Activated T-helper 2 cell treated with anti-CD3 and anti-CD28 coated beads, Interferon-gamma antibody, Interleukin-2, Interleukin-4, amounts not matched to agents 10 μg/mL and 5 μg/mL and 100 μg/mL, durations not matched to agents 14 hours and 24 hours and 36 hours (primary cell): ENCODE measurements at regions of chr1 and their contacts with region 1.

Region 1: GRCh38 chr1:215526553-215527151 is 40.5 kb upstream of the KCTD3 start:
- DNase-seq: no peak
- H3K4me3 Mint-ChIP-seq: no peak overlapping the region
- H3K27ac Mint-ChIP-seq: no peak overlapping the region
- H3K4me1 Mint-ChIP-seq: no peaks in the 10 kb centered on the region
- H3K27me3 Mint-ChIP-seq: peaks cover 5% of the 10 kb centered on the region

Region 2: DNA sequence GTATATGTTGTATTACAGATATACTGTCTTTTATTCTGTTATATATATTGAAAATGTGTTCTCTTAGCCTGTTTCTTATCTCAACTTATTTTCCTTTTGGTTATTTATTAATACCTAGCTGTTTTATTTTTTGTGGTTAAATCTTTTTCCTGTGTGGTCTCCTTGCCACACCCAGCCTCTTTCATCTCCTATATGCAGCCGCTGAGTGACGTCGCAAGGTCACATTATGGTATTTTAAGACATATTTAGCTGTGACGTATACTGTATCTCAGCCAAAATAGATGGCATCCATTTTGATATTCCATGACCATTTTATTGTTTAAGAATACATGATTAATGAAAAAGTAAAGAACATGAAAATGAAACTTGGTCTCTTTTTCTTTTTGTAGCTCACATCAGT is 894.6 kb before region 1 on chr1:
- intact Hi-C with region 1: loop called (anchors 5 kb)
- DNase-seq: no peak
- H3K4me3 Mint-ChIP-seq: no peak overlapping the region
- H3K27ac Mint-ChIP-seq: no peak overlapping the region
- H3K4me1 Mint-ChIP-seq: peaks cover 31% of the 10 kb centered on the region
- H3K27me3 Mint-ChIP-seq: no peaks in the 10 kb centered on the region

Region 3: DNA sequence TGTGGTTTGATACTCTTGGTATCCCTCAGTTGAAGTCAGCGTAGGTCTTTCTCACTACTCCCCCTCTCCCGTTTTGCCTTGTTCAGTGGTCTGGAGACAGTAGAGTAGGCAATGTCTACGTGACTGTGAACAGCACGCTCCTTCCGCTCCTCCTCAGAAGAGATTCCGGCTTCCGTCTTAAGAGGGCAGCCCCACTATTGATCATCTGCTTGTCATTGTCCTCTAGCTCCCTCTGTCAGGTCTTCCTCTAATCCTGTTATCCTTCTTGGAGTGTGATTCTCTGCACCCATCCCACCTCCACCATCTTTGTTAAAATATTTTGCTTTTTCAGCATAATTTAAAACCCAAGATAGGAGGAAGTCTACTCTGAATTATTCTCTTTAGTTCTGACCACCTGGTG is 574.0 kb before region 1 on chr1:
- intact Hi-C with region 1: no loop called
- DNase-seq: no peak
- H3K4me3 Mint-ChIP-seq: no peak overlapping the region
- H3K27ac Mint-ChIP-seq: no peak overlapping the region
- H3K4me1 Mint-ChIP-seq: no peaks in the 10 kb centered on the region
- H3K27me3 Mint-ChIP-seq: no peaks in the 10 kb centered on the region

Region 4: DNA sequence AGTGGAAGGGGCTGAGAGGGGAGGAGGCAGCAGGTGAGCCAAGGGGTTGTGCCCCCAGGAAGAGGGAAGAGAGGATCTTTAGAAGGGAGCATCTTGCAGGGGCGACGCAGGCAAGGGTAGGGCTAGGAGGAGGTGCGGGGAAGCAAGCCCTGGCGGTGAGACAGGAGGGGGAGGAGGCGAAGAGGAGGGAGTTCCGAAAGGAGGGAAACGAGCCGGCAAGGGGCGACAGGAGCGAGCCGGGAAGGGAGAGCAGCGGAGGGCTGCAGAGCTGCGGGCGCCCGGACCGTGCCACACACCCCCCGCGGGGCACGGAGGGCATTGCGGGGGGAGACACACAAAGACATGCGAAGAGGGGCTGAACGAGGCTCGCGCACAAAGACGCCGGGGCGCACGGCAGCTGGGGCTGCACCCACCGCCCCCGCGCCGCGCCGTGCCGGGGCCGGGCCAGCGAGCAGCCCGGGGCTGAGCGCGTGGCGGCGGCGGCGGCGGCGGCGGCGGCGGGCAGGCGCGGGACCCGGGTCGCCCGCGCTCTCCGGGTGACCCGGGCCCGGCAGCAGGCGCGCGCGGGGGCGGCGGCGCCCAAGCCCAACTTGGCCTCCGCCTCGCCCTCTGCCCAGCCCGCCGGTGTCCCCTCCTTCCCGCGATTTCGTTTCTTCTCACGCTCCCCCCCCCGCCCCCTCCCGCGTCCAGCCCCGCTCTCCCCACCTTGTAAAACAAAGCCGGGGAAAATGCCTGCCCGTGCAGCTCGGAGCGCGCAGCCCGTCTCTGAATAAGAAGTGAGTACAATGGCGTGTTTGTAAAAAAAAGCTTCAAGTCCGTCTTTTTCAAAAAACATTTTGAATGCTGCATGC is 443.9 kb before region 1 on chr1 and contains the start of gene KCNK2:
- intact Hi-C with region 1: loop called (anchors 10 kb)
- DNase-seq: no peak
- H3K4me3 Mint-ChIP-seq: no peak within 1 kb of the TSS
- H3K27ac Mint-ChIP-seq: no peak within 1 kb of the TSS
- H3K4me1 Mint-ChIP-seq: no peaks in the 10 kb centered on the region
- H3K27me3 Mint-ChIP-seq: peaks cover 54% of the 10 kb centered on the region
- total RNA-seq, gene KCNK2: not detected in 2 replicates